ENCODE measurements at regions of chr11 and their contacts with region 1.

Region 1: GRCh38 chr11:1943977-1944376 is 3.2 kb upstream of the MRPL23 start:
- DNase-seq: no peak
- H3K4me3 Mint-ChIP-seq: no peak overlapping the region
- H3K27ac Mint-ChIP-seq: no peak overlapping the region
- H3K4me1 Mint-ChIP-seq: peaks cover 3% of the 10 kb centered on the region
- H3K27me3 Mint-ChIP-seq: no peaks in the 10 kb centered on the region

Region 2: DNA sequence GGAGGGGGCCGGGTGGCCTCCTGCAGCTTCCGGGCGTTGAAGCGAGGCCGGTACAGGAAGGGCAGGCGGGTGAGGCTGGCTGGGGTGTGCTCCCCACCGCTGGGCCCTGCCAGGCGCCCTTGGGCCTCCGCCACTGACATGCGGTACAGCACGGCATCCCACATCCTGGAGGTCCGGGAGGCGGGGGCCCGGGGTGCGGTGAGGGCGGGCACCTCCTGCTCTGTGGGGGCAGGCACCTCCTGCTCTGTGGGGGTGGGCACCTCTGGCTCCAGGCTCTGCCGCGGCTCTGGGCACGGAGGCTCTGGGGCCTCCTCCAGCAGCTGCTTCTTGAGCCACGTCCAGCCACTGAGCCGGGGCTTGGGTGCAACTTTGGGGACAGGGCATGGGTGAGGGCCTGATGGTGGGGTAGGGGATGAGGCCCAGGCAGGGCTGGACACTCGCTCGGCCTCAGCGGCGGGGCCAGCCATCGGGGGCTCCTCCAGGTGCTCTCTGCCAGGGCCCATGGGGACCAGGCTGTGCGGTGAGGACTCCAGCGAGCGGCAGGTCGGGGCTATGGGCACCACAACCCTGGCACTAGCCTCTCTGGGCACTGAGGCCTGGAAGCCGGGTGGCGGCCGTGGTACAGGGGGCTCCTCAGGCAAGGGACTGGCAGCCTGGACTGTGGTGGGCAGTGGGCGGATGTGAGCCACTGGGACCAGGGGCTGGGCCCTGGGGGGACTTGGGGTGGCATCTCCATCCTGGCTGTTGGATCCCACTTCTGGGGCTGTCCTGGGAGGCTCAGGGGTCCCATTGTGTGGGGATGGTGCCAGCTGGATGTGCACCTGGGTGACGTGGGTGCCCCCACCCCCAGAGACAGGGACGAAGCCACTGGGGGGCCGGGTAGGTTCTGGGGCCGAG is 54.5 kb before region 1 on chr11:
- CTCF ChIA-PET with region 1: interaction called, 3 read pairs
- POLR2A ChIA-PET with region 1: no interaction called
- intact Hi-C with region 1: loop called (anchors 10 kb)
- DNase-seq: peak; percentile 84
- H3K4me3 Mint-ChIP-seq: peak overlapping the region; percentile 20
- H3K27ac Mint-ChIP-seq: peak overlapping the region; percentile 53
- H3K4me1 Mint-ChIP-seq: peaks cover 22% of the 10 kb centered on the region
- H3K27me3 Mint-ChIP-seq: no peaks in the 10 kb centered on the region

Region 3: GRCh38 chr11:1917671-1918516 is 26.1 kb before region 1 on chr11:
- CTCF ChIA-PET with region 1: no interaction called
- POLR2A ChIA-PET with region 1: no interaction called
- intact Hi-C with region 1: loop called (anchors 1 kb)
- DNase-seq: no peak
- H3K4me3 Mint-ChIP-seq: no peak overlapping the region
- H3K27ac Mint-ChIP-seq: no peak overlapping the region
- H3K4me1 Mint-ChIP-seq: peaks cover 9% of the 10 kb centered on the region
- H3K27me3 Mint-ChIP-seq: peaks cover 10% of the 10 kb centered on the region

Region 4: GRCh38 chr11:2002807-2003206 is 58.8 kb after region 1 on chr11:
- CTCF ChIA-PET with region 1: interaction called, 11 read pairs
- POLR2A ChIA-PET with region 1: no interaction called
- intact Hi-C with region 1: no loop called
- DNase-seq: no peak
- H3K4me3 Mint-ChIP-seq: no peak overlapping the region
- H3K27ac Mint-ChIP-seq: no peak overlapping the region
- H3K4me1 Mint-ChIP-seq: no peaks in the 10 kb centered on the region
- H3K27me3 Mint-ChIP-seq: no peaks in the 10 kb centered on the region

Measured in activated CD4-positive, alpha-beta memory T cell treated with anti-CD3 and anti-CD28 coated beads for 36 hours (primary cell).